CD8-positive, alpha-beta memory T cell (primary cell): ENCODE measurements at regions of chr10 and their contacts with region 1.

Region 1: DNA sequence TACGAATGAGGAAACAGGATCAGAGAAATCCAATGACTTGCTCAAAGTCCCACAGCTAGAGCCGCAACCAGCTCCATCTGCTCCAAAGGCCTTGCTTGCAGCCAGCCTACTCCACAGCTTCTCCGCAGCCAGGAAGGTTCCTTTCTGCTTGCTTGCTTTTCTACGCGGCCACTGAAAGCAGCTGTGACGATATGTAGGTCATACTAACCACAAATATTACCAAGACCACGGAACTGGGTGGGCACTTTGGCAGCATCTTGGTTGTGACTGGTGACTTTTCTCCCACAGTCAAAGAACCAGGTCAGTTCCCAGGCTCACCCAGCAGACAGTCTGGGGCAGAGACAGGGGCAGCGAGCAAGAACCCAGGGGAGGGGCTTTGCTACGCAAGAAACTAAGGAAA is 86.4 kb downstream of the FAM53B start:
- DNase-seq: peak in 4 of 5 donors; percentile 39 to 77 (median 65)
- H3K4me3 ChIP-seq: no peak overlapping the region
- H3K4me3 Mint-ChIP-seq: peak overlapping the region; percentile 41 to 90 (median 80)
- H3K27ac ChIP-seq: peak overlapping the region; percentile 79
- H3K27ac Mint-ChIP-seq: peak overlapping the region; percentile 91 to 99 (median 97)
- H3K4me1 ChIP-seq: peaks cover 89% of the 10 kb centered on the region
- H3K4me1 Mint-ChIP-seq: peaks cover 87 to 95% (median 88%) of the 10 kb centered on the region in 3 donors
- H3K27me3 ChIP-seq: no peaks in the 10 kb centered on the region
- H3K27me3 Mint-ChIP-seq: peaks cover 0 to 2% of the 10 kb centered on the region in 2 donors

Region 2: DNA sequence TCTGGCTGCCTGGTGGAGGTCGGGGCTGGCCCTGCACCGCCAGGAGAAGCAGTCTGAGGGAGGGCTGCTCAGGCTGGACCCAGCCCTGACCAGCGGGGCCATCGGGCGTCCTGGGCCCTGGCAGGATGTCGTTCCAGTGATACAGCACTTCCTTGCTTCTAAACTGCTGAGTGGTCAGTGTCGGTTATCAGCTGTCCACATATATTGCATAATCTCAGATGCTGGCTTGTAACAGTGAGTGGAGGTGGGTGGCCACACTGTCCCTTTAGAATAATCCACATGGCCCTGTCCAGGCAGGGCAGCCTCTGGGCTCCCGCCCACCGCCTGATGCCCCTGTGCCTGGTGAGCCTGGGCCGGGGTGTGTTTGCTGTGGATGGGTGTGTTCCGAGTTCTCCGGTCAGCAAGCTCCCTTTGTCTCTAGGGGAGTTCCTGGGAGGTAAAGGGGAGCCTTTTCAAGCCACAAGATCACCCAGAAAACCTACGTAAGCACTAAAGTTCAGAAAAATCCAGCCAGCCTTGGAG is 110.1 kb before region 1 on chr10:
- CTCF ChIA-PET with region 1: no interaction called
- POLR2A ChIA-PET with region 1: no interaction called
- DNase-seq: no peak
- H3K4me3 ChIP-seq: no peak overlapping the region
- H3K4me3 Mint-ChIP-seq: peak overlapping the region in 1 of 7 donors; percentile 18
- H3K27ac ChIP-seq: no peak overlapping the region
- H3K27ac Mint-ChIP-seq: peak overlapping the region in 1 of 8 donors; percentile 87
- H3K4me1 ChIP-seq: peaks cover 13% of the 10 kb centered on the region
- H3K4me1 Mint-ChIP-seq: peaks cover 11 to 20% (median 19%) of the 10 kb centered on the region in 3 donors
- H3K27me3 ChIP-seq: no peaks in the 10 kb centered on the region
- H3K27me3 Mint-ChIP-seq: no peaks in the 10 kb centered on the region

Region 3: GRCh38 chr10:124565565-124566256 is 92.1 kb before region 1 on chr10:
- CTCF ChIA-PET with region 1: no interaction called
- POLR2A ChIA-PET with region 1: no interaction called
- DNase-seq: no peak
- H3K4me3 ChIP-seq: no peak overlapping the region
- H3K4me3 Mint-ChIP-seq: no peak overlapping the region
- H3K27ac ChIP-seq: no peak overlapping the region
- H3K27ac Mint-ChIP-seq: peak overlapping the region in 1 of 8 donors; percentile 65
- H3K4me1 ChIP-seq: no peaks in the 10 kb centered on the region
- H3K4me1 Mint-ChIP-seq: no peaks in the 10 kb centered on the region
- H3K27me3 ChIP-seq: no peaks in the 10 kb centered on the region
- H3K27me3 Mint-ChIP-seq: no peaks in the 10 kb centered on the region

Region 4: DNA sequence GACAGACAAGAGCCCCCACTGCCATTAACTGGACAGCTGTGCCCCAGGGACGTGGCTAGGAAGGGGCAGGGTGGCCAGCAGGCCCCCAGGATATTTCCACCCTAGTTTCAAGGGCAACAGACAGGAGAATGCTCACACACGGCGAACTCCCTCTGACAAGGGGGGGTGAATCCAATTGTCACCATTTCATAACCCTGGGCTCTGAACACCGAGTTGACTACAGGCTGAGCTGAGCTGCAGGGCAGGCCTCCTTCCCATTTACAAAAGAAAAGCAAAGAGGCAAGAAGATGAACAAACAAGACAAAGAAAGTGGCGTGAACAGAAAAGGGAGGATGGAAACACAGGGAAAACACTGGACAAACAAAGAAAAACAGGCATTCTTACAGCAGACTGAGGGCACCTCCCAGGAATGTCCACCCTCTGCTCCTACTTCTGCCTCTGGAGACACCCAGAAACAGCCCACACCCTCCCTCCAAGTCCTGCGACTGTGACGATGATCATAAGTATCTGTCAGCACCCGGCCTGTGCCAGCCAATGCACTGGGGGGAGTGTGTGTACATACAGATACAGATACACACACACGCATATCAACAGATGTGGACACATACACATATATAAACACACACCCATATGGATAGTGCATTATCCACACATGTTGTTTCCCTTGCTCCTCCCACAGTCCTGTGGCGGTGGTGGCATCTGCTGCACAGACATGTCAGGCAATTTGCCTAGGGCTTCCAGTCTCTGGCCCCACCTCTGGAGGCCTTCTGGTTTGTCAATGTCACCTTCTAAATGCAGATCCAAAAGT is 20.1 kb after region 1 on chr10:
- CTCF ChIA-PET with region 1: interaction called, 16 read pairs
- POLR2A ChIA-PET with region 1: interaction called, 3 read pairs
- DNase-seq: no peak
- H3K4me3 ChIP-seq: peak overlapping the region; percentile 11
- H3K4me3 Mint-ChIP-seq: peak overlapping the region; percentile 69 to 88 (median 82)
- H3K27ac ChIP-seq: no peak overlapping the region
- H3K27ac Mint-ChIP-seq: peak overlapping the region; percentile 72 to 96 (median 92)
- H3K4me1 ChIP-seq: peaks cover 96% of the 10 kb centered on the region
- H3K4me1 Mint-ChIP-seq: peaks cover 83 to 97% (median 92%) of the 10 kb centered on the region in 3 donors
- H3K27me3 ChIP-seq: no peaks in the 10 kb centered on the region
- H3K27me3 Mint-ChIP-seq: peaks cover 0 to 2% of the 10 kb centered on the region in 2 donors

Region 5: DNA sequence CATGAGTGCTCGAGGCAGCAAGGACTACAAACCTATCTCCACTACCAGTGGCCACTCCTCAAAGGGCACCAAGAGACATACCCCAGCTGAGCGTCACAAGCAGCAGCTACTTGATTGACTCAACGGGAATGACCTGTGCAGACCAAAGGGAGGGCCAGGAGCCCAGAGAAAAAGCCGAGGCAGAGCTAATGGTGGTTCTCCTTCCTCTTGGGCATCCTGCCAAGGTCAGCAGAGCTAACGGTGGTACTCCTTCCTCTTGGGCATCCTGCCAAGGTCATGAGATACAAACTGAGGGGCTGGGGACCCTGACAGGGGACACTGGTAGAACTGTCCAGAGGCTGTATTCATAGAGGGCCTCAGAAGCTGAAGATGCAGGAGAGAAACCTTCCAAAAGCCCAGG is 26.0 kb after region 1 on chr10:
- CTCF ChIA-PET with region 1: interaction called, 16 read pairs
- POLR2A ChIA-PET with region 1: interaction called, 3 read pairs
- DNase-seq: no peak
- H3K4me3 ChIP-seq: no peak overlapping the region
- H3K4me3 Mint-ChIP-seq: peak overlapping the region in 6 of 7 donors; percentile 21 to 66 (median 48)
- H3K27ac ChIP-seq: no peak overlapping the region
- H3K27ac Mint-ChIP-seq: peak overlapping the region in 7 of 8 donors; percentile 64 to 97 (median 73)
- H3K4me1 ChIP-seq: peaks cover 96% of the 10 kb centered on the region
- H3K4me1 Mint-ChIP-seq: peaks cover 84 to 96% (median 93%) of the 10 kb centered on the region in 3 donors
- H3K27me3 ChIP-seq: no peaks in the 10 kb centered on the region
- H3K27me3 Mint-ChIP-seq: no peaks in the 10 kb centered on the region